ENCODE measurements at regions of chr16 and their contacts with region 1.

Region 1: DNA sequence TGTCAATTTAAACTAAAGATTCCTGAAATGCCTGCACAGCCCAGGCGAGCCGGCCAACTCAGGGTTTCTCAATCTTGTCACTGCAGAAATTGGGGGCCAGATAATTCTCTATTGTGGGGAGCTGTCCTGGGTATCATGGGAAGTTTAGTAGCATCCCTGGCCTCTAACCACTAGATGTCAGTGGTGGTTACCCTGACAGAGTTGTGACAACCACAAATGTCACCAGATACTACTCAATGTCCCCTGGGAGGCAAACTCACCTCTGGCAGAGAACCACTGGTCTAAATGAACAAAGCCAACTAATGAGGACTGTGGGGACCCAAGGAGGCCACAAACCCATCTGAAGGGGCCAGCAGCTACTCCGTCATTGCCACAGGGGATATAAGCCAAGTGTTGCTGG is 90.9 kb downstream of the MYH11 start:
- DNase-seq: peak in 6 of 9 donors; percentile 23 to 40 (median 32)
- ATAC-seq: peak; percentile 83
- H3K4me3 ChIP-seq: no peak overlapping the region
- H3K4me3 Mint-ChIP-seq: no peak overlapping the region
- H3K27ac ChIP-seq: no peak overlapping the region
- H3K27ac Mint-ChIP-seq: no peak overlapping the region
- H3K4me1 ChIP-seq: no peaks in the 10 kb centered on the region
- H3K4me1 Mint-ChIP-seq: peaks cover 0 to 2% (median 0%) of the 10 kb centered on the region in 7 donors
- H3K27me3 ChIP-seq: no peaks in the 10 kb centered on the region
- H3K27me3 Mint-ChIP-seq: peaks cover 0 to 11% (median 6%) of the 10 kb centered on the region in 5 donors

Region 2: GRCh38 chr16:15822957-15823356 is 57.1 kb after region 1 on chr16:
- CTCF ChIA-PET with region 1: interaction called, 5 read pairs
- POLR2A ChIA-PET with region 1: no interaction called
- intact Hi-C with region 1: loop called in 1 of 2 experiments (anchors 1 kb)
- DNase-seq: no peak
- ATAC-seq: no peak
- H3K4me3 ChIP-seq: no peak overlapping the region
- H3K4me3 Mint-ChIP-seq: no peak overlapping the region
- H3K27ac ChIP-seq: no peak overlapping the region
- H3K27ac Mint-ChIP-seq: no peak overlapping the region
- H3K4me1 ChIP-seq: no peaks in the 10 kb centered on the region
- H3K4me1 Mint-ChIP-seq: no peaks in the 10 kb centered on the region
- H3K27me3 ChIP-seq: no peaks in the 10 kb centered on the region
- H3K27me3 Mint-ChIP-seq: no peaks in the 10 kb centered on the region

Region 3: DNA sequence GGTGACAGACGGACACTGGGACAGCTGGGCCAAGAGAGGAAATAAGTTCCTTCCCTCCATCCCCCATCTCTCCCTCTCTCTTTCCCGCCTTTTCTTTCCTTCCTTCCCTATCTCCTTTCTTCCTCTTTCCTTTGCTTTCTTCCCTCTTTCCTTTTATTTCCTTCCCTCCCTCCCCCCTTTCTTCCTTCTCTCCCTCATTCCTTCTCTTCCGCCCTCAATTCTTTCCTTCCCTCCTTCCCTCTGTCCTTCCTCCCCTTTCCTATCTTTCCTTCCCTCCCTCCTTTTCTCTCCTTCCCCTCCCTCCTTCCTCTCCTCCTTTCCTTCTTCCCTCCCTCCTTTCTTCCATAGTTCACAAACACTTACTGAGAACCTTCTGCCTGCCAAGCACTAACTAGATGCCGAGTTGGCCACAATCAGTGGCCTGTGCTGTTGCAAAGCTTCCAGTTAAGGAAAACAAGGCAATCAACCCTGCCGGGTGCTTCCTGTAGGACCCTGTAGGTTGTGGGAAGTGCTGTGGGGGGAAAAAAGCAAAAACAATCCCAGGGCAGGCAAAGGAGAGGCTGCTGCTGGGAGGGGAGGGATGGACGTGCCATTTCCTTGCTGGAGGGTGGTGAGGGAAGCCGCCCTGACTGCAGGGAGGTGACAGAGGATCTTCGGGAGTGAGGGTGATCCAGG is 425.8 kb after region 1 on chr16:
- CTCF ChIA-PET with region 1: no interaction called
- POLR2A ChIA-PET with region 1: no interaction called
- intact Hi-C with region 1: loop called in 1 of 2 experiments (anchors 1 kb)
- DNase-seq: no peak
- ATAC-seq: no peak
- H3K4me3 ChIP-seq: no peak overlapping the region
- H3K4me3 Mint-ChIP-seq: no peak overlapping the region
- H3K27ac ChIP-seq: no peak overlapping the region
- H3K27ac Mint-ChIP-seq: no peak overlapping the region
- H3K4me1 ChIP-seq: no peaks in the 10 kb centered on the region
- H3K4me1 Mint-ChIP-seq: no peaks in the 10 kb centered on the region
- H3K27me3 ChIP-seq: no peaks in the 10 kb centered on the region
- H3K27me3 Mint-ChIP-seq: peaks cover 0 to 24% (median 3%) of the 10 kb centered on the region in 5 donors

Measured in naive thymus-derived CD4-positive, alpha-beta T cell (primary cell).